ENCODE measurements at regions of chr17 and their contacts with region 1.

Region 1: GRCh38 chr17:3012926-3013581 is 50.4 kb downstream of the OR1D5 start:
- DNase-seq: peak; percentile 78
- ATAC-seq: peak; percentile 96
- H3K4me3 ChIP-seq: no peak overlapping the region
- H3K4me3 Mint-ChIP-seq: no peak overlapping the region
- H3K27ac ChIP-seq: no peak overlapping the region
- H3K27ac Mint-ChIP-seq: peak overlapping the region; percentile 41
- H3K4me1 ChIP-seq: no peaks in the 10 kb centered on the region
- H3K4me1 Mint-ChIP-seq: peaks cover 3% of the 10 kb centered on the region
- H3K27me3 ChIP-seq: no peaks in the 10 kb centered on the region
- H3K27me3 Mint-ChIP-seq: no peaks in the 10 kb centered on the region
- CTCF ChIP-seq: peak; percentile 84

Region 2: DNA sequence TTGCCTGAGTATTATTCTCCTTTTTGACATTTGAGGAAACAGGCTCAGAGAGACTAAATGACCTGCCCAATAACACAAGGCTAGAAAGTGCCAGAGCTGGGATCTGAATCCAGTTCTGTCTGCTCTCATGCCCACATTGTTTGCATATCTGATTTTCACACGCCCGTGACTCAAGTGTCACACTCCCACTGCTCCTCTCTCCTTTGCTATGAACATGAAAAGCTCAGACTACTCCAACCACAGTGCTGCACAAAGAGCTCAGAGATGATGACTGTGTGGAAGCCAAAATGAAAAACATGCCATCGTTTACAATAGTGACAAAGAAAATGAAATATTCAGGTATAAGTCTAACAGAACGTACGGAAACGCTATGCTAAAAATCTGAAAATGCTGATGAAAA is 817.3 kb before region 1 on chr17:
- CTCF ChIA-PET with region 1: no interaction called
- POLR2A ChIA-PET with region 1: no interaction called
- intact Hi-C with region 1: no loop called
- DNase-seq: no peak
- ATAC-seq: no peak
- H3K4me3 ChIP-seq: no peak overlapping the region
- H3K4me3 Mint-ChIP-seq: peak overlapping the region; percentile 2
- H3K27ac ChIP-seq: no peak overlapping the region
- H3K27ac Mint-ChIP-seq: no peak overlapping the region
- H3K4me1 ChIP-seq: peaks cover 6 to 15% of the 10 kb centered on the region in 2 donors
- H3K4me1 Mint-ChIP-seq: peaks cover 24% of the 10 kb centered on the region
- H3K27me3 ChIP-seq: no peaks in the 10 kb centered on the region
- H3K27me3 Mint-ChIP-seq: no peaks in the 10 kb centered on the region
- CTCF ChIP-seq: no peak

Region 3: DNA sequence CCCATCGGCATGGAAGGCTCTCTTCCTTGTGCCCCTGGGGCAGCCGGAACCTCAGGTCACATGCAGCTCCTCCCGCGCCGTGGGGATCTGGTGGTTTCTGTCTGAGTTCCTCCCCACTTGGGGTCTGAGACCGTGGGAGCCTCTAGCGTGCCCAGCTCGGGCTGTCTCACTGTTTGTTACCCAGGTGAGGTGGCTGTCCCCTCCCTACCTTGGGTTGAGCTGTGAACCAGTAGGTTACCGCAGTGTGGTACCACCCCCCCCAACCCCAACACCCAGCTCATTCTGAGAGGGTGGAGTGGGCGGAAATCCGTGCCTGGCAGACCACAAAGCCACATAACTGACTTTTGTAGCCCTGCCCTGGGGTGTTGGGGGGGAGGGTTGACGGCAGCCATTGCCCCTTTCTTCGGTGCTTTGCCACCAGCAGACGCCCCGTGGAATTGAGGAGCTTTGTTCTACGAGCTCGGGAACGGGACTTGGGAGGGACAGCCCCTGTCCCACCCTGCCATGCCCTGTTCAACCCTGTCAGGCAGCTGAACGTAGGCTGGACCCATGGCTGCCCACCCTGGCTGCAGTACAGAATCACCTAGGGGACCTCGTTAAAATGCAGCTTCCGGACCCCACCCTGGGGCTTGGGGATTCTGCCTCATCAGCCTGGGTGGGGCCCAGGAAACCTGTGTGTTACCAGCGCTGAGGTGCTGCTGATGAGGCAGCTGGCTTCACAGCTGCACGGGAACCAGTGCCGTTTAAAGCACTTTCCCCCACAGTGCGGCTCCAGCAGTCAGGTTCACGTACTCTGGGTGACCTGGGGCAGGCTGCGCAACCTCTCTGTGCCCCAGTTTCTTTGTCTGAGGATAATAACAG is 198.3 kb before region 1 on chr17:
- CTCF ChIA-PET with region 1: interaction called, 18 read pairs
- POLR2A ChIA-PET with region 1: interaction called, 5 read pairs
- intact Hi-C with region 1: no loop called
- DNase-seq: peak; percentile 95
- ATAC-seq: peak; percentile 82
- H3K4me3 ChIP-seq: peak overlapping the region in 4 of 5 experiments; percentile 39 to 70 (median 57)
- H3K4me3 Mint-ChIP-seq: peak overlapping the region; percentile 75
- H3K27ac ChIP-seq: peak overlapping the region; percentile 69 to 79
- H3K27ac Mint-ChIP-seq: peak overlapping the region; percentile 93
- H3K4me1 ChIP-seq: peaks cover 24 to 55% of the 10 kb centered on the region in 2 donors
- H3K4me1 Mint-ChIP-seq: peaks cover 44% of the 10 kb centered on the region
- H3K27me3 ChIP-seq: no peaks in the 10 kb centered on the region
- H3K27me3 Mint-ChIP-seq: no peaks in the 10 kb centered on the region
- CTCF ChIP-seq: no peak

Region 4: DNA sequence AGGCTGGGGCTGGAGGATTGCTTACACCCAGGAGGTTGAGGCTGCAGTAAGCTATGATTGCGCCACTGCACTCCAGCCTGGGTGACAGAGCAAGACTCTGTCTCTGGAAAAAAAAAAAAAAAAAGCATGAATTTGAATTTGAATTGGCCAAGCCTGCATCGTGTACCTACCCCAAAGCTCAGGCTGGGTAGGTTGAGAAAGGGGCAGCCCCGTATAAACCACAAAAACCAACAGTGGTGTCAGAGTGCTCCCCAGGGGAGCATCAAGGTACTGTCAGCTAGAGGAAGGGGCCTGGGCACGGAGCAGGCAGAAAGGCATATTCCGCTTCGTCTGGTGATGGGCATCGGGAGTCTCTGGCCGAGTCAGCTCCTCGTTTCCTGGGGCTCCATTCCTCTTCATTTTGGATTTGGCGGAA is 175.9 kb before region 1 on chr17:
- CTCF ChIA-PET with region 1: interaction called, 69 read pairs
- POLR2A ChIA-PET with region 1: no interaction called
- intact Hi-C with region 1: no loop called
- DNase-seq: peak; percentile 88
- ATAC-seq: peak; percentile 100
- H3K4me3 ChIP-seq: no peak overlapping the region
- H3K4me3 Mint-ChIP-seq: no peak overlapping the region
- H3K27ac ChIP-seq: no peak overlapping the region
- H3K27ac Mint-ChIP-seq: peak overlapping the region; percentile 68
- H3K4me1 ChIP-seq: peaks cover 8 to 9% of the 10 kb centered on the region in 2 donors
- H3K4me1 Mint-ChIP-seq: peaks cover 14% of the 10 kb centered on the region
- H3K27me3 ChIP-seq: peaks cover 0 to 41% (median 14%) of the 10 kb centered on the region in 4 experiments
- H3K27me3 Mint-ChIP-seq: peaks cover 25% of the 10 kb centered on the region
- CTCF ChIP-seq: peak; percentile 70

Region 5: GRCh38 chr17:2853111-2853721 is 159.8 kb before region 1 on chr17:
- CTCF ChIA-PET with region 1: interaction called, 370 read pairs
- POLR2A ChIA-PET with region 1: interaction called, 5 read pairs
- intact Hi-C with region 1: loop called (anchors 1 kb)
- DNase-seq: peak; percentile 54
- ATAC-seq: peak; percentile 29
- H3K4me3 ChIP-seq: peak overlapping the region in 3 of 5 experiments; percentile 52 to 55 (median 54)
- H3K4me3 Mint-ChIP-seq: peak overlapping the region; percentile 77
- H3K27ac ChIP-seq: no peak overlapping the region
- H3K27ac Mint-ChIP-seq: no peak overlapping the region
- H3K4me1 ChIP-seq: peaks cover 22 to 32% of the 10 kb centered on the region in 2 donors
- H3K4me1 Mint-ChIP-seq: peaks cover 23% of the 10 kb centered on the region
- H3K27me3 ChIP-seq: peaks cover 0 to 64% (median 32%) of the 10 kb centered on the region in 4 experiments
- H3K27me3 Mint-ChIP-seq: peaks cover 38% of the 10 kb centered on the region
- CTCF ChIP-seq: no peak

Region 6: DNA sequence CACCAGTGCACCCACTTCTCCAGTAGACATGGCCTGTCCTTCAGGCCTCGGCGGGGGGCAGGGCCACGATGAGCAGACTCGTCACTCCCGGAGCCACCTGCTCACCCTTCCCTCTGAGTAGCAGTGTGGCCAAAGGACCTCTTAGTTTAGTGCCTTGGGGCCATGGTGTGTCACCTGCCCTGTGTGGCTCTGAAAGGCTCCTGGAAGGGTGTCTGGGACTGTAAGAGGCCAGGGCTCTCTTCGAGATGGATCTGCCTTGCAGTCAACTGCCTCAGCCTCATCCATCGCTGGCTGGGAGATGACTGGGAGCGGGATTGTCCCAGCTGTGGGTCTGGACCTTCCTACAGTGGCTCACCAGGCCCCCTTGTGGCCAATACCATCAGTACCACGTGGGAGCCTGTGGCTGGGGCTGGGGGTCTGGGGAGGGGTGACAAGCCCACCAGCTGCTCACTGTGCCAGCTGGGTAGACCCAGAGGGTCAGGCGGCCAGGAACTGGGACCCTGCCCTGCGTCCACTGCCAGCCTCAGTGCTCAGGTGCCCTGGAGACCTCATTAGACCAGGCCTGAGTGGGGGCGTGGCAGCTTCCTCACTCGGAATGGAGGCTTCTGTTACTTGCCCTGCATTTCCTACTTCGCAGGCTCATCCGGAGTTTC is 83.0 kb before region 1 on chr17:
- CTCF ChIA-PET with region 1: interaction called, 21 read pairs
- POLR2A ChIA-PET with region 1: interaction called, 3 read pairs
- intact Hi-C with region 1: no loop called
- DNase-seq: peak; percentile 47
- ATAC-seq: peak; percentile 34
- H3K4me3 ChIP-seq: no peak overlapping the region
- H3K4me3 Mint-ChIP-seq: no peak overlapping the region
- H3K27ac ChIP-seq: no peak overlapping the region
- H3K27ac Mint-ChIP-seq: no peak overlapping the region
- H3K4me1 ChIP-seq: peaks cover 24 to 28% of the 10 kb centered on the region in 2 donors
- H3K4me1 Mint-ChIP-seq: peaks cover 28% of the 10 kb centered on the region
- H3K27me3 ChIP-seq: peaks cover 0 to 4% (median 1%) of the 10 kb centered on the region in 4 experiments
- H3K27me3 Mint-ChIP-seq: peaks cover 5% of the 10 kb centered on the region
- CTCF ChIP-seq: peak; percentile 75

Measured in B cell (primary cell).